GM10248 (cell line): ENCODE measurements at regions of chr20 and their contacts with region 1.

Region 1: GRCh38 chr20:17898548-17898994 is 70.0 kb downstream of the SNX5 start:
- DNase-seq: peak; percentile 65
- CTCF ChIP-seq: peak; percentile 85

Region 2: DNA sequence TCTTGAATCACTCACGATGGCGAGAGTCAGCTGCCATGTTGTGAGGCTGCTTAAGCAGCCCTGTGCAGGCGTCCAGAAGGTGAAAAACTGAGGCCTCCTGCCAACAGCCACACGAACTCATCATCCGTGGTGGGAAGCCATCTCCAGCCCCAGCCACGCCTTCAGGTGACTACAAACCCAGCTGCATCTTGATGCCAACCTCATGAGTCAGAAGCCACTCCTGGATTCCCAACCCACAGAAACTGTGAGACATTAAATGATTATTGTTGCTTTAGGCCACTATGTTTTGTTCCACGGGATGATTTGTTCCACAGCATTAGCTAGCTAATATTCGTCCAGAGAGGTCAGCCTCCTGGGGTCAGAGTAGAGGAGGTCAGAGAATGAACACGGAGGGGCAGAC is 10.5 kb before region 1 on chr20:
- CTCF ChIA-PET with region 1: interaction called, 11 read pairs
- POLR2A ChIA-PET with region 1: no interaction called
- DNase-seq: no peak
- CTCF ChIP-seq: no peak